ENCODE measurements at regions of chr11 and their contacts with region 1.

Region 1: DNA sequence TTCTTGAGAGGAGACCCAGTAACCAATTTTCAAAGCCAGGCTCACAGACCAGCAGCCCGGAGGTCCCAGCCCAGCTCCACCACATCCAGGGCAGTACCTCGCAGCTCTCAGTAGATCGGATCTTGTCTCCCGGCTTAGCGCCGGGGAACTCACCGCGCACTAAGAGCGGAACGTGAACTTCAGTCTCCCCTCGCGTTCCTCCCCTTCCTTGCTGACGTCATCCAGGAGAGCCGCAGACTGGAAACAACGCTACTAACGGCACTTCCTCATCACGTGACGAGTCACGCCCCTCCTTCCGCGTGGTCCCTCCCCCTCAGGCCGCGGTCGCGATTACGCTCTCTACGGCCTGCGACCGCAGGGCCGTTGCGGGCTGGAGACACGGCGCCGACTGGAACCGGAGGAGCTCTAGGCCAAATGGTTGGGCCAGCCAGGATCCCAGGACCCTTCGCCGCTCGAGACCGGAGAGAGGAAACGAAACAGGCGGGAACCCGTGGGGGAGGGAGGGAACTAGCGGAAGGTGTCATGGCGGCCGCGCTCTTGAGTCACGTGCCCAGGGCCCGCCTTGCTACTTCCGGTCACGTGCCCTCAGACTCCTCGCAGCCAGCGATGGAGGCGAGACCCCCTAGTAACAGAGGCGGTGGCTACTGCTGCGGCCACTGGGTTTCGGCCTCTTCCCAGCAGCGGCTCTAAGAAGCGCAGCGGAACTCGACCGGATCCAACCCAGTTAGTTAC is at the starts of genes GTF2H1 and HPS5:
- DNase-seq: peak; percentile 99
- H3K4me3 ChIP-seq: peak within 1 kb of the TSS; percentile 74 to 95 (median 84)
- H3K27ac ChIP-seq: peak within 1 kb of the TSS; percentile 94 to 97 (median 94)
- H3K4me1 ChIP-seq: peaks cover 33 to 52% (median 45%) of the 10 kb centered on the region in 4 donors
- H3K27me3 ChIP-seq: no peaks in the 10 kb centered on the region
- CTCF ChIP-seq: no peak
- EP300 ChIP-seq: peak; percentile 94
- POLR2A ChIP-seq: peak; percentile 69
- total RNA-seq, gene GTF2H1: 40.3 to 56.7 (median 48.3) TPM
- total RNA-seq, gene HPS5: 17.0 to 24.5 (median 18.6) TPM

Region 2: DNA sequence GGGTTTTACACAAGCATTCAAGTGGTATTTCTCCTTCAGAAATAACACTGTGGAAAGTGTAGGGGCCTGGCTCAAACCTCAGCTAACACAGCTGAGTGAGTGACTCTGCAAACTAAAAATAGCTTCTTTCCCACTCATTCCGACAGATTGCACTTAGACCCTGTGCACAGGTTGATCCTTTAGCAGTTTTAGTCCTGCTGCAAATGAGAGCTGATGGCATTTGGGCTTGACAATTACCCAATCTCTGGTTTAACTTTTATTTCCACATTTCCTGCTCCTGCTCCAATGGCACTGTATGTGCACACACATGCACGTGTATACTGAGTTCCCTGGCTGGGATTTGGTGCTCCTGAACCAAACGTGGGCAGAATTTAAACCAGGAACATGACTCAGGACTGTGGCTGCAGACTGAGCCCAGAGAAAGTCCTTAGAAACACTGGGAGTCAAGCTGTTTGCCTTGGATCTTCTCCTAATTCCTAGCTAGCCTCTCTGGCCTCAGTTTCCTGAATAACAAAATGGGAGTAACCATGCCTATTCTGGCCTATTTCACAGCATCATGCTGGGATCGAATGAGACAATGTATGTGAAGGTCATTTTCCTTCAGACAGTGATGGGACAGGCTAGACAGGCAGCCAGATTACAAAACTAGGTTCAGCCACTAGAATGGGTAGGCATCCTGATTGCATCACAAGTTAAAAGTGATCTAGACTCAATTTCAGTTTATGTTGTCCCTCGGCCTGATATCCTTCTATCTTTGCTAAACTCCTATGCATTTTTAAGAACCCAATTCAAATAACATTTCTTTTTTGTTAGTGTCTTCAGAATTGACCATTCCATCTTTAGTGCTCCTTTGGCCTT is 367.5 kb before region 1 on chr11:
- intact Hi-C with region 1: no loop called
- DNase-seq: no peak
- H3K4me3 ChIP-seq: no peak overlapping the region
- H3K27ac ChIP-seq: no peak overlapping the region
- H3K4me1 ChIP-seq: peaks cover 0 to 6% (median 2%) of the 10 kb centered on the region in 4 donors
- H3K27me3 ChIP-seq: no peaks in the 10 kb centered on the region
- CTCF ChIP-seq: no peak
- EP300 ChIP-seq: no peak
- POLR2A ChIP-seq: no peak

Region 3: GRCh38 chr11:18145025-18145424 is 177.1 kb before region 1 on chr11:
- intact Hi-C with region 1: no loop called
- DNase-seq: no peak
- H3K4me3 ChIP-seq: no peak overlapping the region
- H3K27ac ChIP-seq: no peak overlapping the region
- H3K4me1 ChIP-seq: no peaks in the 10 kb centered on the region
- H3K27me3 ChIP-seq: peaks cover 0 to 8% (median 0%) of the 10 kb centered on the region in 4 donors
- CTCF ChIP-seq: no peak
- EP300 ChIP-seq: no peak
- POLR2A ChIP-seq: no peak

Region 4: DNA sequence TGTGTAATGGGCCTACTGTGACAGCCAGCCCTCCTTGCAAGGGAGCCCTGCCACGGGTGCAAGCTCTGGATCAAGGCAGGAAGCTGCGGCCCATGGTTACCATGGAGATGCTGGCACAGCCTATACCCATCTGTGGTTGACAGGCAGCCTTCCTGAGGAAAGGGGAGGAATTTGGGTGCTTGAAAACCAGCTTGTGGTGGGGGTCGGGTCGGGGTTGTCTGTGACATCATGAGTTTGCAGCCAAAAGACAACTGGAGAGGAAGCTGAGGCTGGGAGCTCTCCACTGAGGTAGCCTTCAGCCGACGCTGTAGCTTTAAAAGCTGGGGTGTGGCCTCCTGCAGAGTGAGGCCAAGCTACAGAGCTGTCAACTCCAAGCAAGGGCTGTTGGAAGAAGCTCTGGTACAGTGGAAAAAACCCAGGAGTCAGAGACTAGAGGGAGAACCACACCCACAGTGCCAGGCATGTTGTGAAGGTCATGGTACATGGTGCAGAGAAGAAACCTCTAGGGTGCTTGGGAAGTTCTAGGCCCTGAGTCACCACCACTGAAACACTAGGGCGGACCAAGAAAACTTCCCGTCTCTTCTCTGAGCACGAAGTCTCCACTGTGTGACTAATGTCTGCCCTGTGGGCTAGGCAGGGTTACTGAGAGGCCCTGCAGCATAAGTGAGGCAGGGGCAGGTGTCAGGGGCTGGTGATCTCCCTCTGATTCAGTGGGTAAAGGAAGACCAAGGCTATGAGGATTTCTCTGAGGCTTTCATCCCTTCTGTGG is 61.4 kb after region 1 on chr11:
- intact Hi-C with region 1: loop called (anchors 5 kb)
- DNase-seq: peak; percentile 94
- H3K4me3 ChIP-seq: peak overlapping the region in 3 of 4 donors; percentile 5 to 32 (median 8)
- H3K27ac ChIP-seq: peak overlapping the region; percentile 93 to 97 (median 96)
- H3K4me1 ChIP-seq: peaks cover 30 to 36% (median 32%) of the 10 kb centered on the region in 4 donors
- H3K27me3 ChIP-seq: no peaks in the 10 kb centered on the region
- CTCF ChIP-seq: peak in 1 of 3 experiments; percentile 22
- EP300 ChIP-seq: no peak
- POLR2A ChIP-seq: no peak

Region 5: DNA sequence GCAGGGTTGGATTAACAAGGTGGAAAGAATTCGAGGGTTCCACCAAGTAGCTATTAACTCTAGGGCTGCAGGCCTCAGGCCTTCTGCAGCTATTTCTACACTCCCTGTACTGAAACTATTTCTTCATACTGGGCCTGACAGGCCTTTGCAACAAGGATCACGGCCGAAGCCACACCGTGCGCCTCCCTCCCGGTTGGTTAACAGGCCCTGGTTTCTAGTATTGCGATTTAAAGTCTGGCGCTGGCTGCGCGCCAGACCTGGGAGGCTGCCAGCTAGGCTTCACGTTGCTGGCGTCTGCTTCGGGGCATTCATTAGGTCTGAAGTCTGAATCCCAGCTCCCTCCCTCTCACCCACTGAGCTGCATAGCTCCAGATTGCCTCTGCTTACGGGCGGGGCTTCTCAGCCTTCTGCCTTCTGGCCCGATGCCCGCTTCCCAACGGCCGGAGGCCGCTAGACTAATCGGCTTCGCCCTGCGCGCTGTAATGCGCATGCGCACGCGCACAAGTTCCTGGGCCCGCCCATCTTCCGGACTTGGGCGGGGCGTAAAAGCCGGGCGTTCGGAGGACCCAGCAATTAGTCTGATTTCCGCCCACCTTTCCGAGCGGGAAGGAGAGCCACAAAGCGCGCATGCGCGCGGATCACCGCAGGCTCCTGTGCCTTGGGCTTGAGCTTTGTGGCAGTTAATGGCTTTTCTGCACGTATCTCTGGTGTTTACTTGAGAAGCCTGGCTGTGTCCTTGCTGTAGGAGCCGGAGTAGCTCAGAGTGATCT is 73.8 kb after region 1 on chr11:
- intact Hi-C with region 1: loop called (anchors 2 kb)
- DNase-seq: peak; percentile 98
- H3K4me3 ChIP-seq: peak overlapping the region; percentile 80 to 89 (median 86)
- H3K27ac ChIP-seq: peak overlapping the region; percentile 92 to 97 (median 96)
- H3K4me1 ChIP-seq: peaks cover 15 to 37% (median 28%) of the 10 kb centered on the region in 4 donors
- H3K27me3 ChIP-seq: no peaks in the 10 kb centered on the region
- CTCF ChIP-seq: peak in 1 of 3 experiments; percentile 16
- EP300 ChIP-seq: no peak
- POLR2A ChIP-seq: peak; percentile 10

Region 6: DNA sequence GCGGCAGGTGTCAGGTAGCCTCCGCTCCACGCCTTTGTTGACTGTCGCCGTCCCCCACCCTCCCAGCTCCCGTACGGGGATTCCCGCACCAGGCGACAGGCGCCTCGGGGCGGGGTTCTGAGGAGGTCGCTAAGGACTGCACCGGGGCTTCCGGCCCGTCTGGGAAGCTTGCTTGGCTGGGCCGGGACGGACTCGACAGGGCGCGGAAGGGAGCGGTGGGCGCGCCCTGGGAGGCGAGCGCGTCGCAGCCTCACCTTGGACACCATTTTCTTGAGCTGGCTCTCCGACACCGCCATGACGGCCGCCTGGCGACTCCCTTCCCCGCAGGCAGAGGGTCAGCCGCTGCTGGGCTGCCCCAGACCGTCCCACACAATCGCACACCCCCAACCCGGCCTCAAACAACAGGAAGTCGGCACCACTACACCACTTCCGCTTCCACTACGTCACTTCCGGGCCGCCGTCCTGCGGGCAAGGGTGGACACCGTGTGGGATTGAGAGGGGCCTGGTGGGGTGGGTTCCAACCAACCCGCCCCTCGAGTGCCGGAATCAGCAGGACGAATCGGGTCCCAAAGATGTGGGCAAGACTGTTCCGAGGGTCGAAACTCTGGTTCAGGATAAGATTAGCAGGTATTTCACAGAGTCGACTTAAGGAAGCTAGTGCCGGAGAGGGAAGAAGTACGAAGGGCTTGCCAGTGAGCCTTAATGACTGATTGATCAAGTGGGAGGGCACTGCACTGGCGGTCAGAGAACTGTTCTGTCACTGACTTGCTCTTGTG is 204.6 kb after region 1 on chr11 and contains the start of gene TSG101:
- intact Hi-C with region 1: loop called (anchors 5 kb)
- DNase-seq: peak; percentile 98
- H3K4me3 ChIP-seq: peak within 1 kb of the TSS; percentile 80 to 98 (median 97)
- H3K27ac ChIP-seq: peak within 1 kb of the TSS; percentile 88 to 96 (median 93)
- H3K4me1 ChIP-seq: peaks cover 16 to 51% (median 33%) of the 10 kb centered on the region in 4 donors
- H3K27me3 ChIP-seq: no peaks in the 10 kb centered on the region
- CTCF ChIP-seq: peak in 1 of 3 experiments; percentile 7
- EP300 ChIP-seq: no peak
- POLR2A ChIP-seq: peak; percentile 81
- total RNA-seq, gene TSG101: 60.1 to 93.2 (median 80.5) TPM

Region 7: DNA sequence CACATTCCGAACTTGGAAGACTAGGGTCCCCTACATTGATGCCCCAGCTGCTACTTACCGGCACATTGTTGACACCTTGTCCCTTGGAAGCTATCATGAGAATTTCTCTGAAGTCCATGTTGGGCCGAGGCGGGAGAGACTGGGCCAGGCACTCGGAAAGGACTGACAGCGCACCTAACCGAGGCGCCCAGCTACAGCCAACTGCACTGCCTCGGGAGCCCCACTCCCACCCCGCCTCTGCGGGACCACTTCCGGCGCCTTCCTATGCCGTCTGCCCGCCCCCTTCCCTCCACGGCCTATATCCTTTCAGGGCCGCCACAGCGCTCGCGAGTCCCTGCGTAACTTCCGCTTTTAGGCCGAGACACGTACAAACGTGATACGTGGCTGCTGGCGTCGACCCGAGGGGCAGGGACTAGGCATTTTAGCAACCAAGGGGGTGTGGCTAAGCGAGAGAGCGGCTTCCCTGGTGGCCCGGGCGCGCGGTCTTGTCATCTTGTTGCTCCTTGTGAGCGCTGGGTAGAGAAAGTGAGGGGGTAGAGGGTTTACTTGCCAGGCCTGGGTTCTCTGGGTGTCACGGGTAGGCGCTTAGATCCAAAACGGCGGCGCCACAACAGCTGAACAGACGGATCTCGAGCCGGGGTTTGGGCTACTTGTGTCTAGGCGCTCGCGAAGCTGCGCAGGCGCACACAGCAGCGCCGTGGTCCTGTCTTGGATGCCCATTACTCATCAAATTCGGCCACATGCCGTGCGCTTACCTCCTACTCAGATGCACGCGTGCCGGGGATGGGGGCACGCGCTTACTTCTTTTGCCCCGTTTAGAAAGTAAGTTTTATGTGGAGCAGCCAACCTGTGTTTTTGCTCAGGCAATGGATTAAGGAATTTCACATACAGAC is 312.2 kb after region 1 on chr11 and contains the start of gene SPTY2D1:
- intact Hi-C with region 1: loop called (anchors 5 kb)
- DNase-seq: peak; percentile 100
- H3K4me3 ChIP-seq: peak within 1 kb of the TSS; percentile 76 to 91 (median 84)
- H3K27ac ChIP-seq: peak within 1 kb of the TSS; percentile 90 to 95 (median 93)
- H3K4me1 ChIP-seq: peaks cover 10 to 44% (median 35%) of the 10 kb centered on the region in 4 donors
- H3K27me3 ChIP-seq: no peaks in the 10 kb centered on the region
- CTCF ChIP-seq: peak in 2 of 3 experiments; percentile 10 to 13
- EP300 ChIP-seq: no peak
- POLR2A ChIP-seq: peak; percentile 82
- total RNA-seq, gene SPTY2D1: 9.6 to 32.1 (median 18.1) TPM

Measured in esophagus muscularis mucosa (tissue), 4 donors.